ENCODE measurements at regions of chr6 and their contacts with region 1.

Region 1: GRCh38 chr6:34887753-34888513 is at the start of gene TAF11:
- DNase-seq: peak; percentile 90 to 93
- ATAC-seq: peak; percentile 93 to 94
- H3K4me3 ChIP-seq: peak within 1 kb of the TSS; percentile 90 to 96 (median 94)
- H3K27ac ChIP-seq: peak within 1 kb of the TSS; percentile 82 to 89 (median 88)
- H3K4me1 ChIP-seq: peaks cover 20 to 23% of the 10 kb centered on the region in 2 donors
- H3K27me3 ChIP-seq: no peaks in the 10 kb centered on the region
- CTCF ChIP-seq: peak in 1 of 5 experiments; percentile 18
- POLR2A ChIP-seq: peak; percentile 70 to 79
- total RNA-seq, gene TAF11: 23.2 to 32.6 (median 24.0) TPM

Region 2: DNA sequence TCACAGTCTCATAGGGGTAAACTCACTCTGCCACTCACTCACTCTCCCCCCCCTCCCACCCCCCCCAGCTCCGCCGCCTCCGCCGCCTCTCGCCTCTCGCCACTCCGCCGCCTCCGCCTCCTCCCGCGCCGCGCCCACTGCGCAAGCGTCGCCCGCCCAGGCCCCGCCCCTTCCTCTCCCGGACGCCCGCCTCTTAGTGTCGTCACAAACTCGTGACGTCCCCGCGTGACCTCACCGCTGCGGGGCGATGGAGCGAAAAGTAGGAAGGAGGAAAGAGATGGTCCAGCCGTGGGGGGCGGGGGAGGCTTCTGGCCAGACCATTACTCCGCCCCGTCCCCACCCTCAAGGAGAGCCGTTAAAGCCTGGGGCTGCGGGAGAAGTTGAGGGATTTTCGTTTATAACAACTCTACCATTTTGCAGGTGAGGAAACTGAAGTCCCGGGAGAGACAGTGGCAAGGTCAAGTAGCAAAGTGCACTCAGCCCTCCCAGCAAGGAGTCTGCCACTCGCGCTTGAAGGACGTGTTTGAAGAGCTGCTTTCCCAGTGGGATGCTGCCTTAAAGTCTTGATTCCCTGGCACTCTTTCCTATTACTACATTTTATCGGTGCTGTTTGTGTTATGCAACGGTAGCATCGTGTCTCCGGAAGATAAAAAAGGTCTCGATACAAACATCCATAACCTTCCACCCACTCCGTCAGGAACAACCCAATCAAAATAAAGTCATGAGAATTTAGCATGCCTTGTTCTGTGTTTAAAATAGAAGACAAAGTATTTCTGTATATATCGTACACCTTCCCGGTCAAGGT is 191.0 kb before region 1 on chr6 and contains the start of gene ILRUN:
- in situ Hi-C with region 1: no loop called
- intact Hi-C with region 1: loop called (anchors 5 kb)
- DNase-seq: peak; percentile 92 to 94
- ATAC-seq: peak; percentile 78 to 80
- H3K4me3 ChIP-seq: peak within 1 kb of the TSS; percentile 79 to 100 (median 95)
- H3K27ac ChIP-seq: peak within 1 kb of the TSS; percentile 99 to 100 (median 100)
- H3K4me1 ChIP-seq: peaks cover 30 to 31% of the 10 kb centered on the region in 2 donors
- H3K27me3 ChIP-seq: no peaks in the 10 kb centered on the region
- CTCF ChIP-seq: no peak
- POLR2A ChIP-seq: peak; percentile 76 to 87
- total RNA-seq, gene ILRUN: 136 to 252 (median 169) TPM

Region 3: DNA sequence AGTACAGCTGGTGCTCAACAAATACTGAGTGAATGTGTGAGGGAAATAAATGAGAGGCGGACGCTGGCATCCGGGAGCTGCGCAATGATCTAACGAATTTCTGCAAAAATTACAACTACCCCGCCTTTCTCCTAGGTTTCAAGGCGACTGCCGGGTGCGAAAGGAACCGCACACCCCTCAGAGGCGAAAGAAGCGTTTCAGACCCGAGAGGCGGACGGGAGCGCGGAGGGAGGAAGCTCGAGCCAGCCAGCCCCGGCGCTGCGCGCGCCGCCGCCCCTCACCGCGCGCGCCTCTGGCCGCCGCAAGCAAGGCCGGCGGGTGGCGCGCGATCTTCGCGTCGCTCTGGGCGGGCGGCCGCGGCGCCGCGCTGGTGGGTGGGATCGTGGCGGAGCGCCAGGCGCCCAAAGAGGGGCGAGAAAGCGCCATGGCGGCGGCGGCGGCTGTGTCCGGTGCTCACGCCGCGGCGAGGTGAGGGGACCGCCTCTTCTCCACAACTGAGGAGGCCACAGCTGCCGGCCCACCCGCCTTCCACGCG is 96.2 kb before region 1 on chr6 and contains the start of gene BLTP3A:
- in situ Hi-C with region 1: loop called in 1 of 4 experiments (anchors 5 kb)
- intact Hi-C with region 1: loop called (anchors 1 kb)
- DNase-seq: peak; percentile 41 to 66
- ATAC-seq: peak; percentile 85 to 87
- H3K4me3 ChIP-seq: peak within 1 kb of the TSS; percentile 87 to 95 (median 93)
- H3K27ac ChIP-seq: peak within 1 kb of the TSS; percentile 93 to 98 (median 96)
- H3K4me1 ChIP-seq: peaks cover 5 to 14% of the 10 kb centered on the region in 2 donors
- H3K27me3 ChIP-seq: no peaks in the 10 kb centered on the region
- CTCF ChIP-seq: peak in 3 of 5 experiments; percentile 11 to 34 (median 28)
- POLR2A ChIP-seq: peak; percentile 72 to 85
- total RNA-seq, gene BLTP3A: 19.9 to 36.0 (median 23.2) TPM

Region 4: DNA sequence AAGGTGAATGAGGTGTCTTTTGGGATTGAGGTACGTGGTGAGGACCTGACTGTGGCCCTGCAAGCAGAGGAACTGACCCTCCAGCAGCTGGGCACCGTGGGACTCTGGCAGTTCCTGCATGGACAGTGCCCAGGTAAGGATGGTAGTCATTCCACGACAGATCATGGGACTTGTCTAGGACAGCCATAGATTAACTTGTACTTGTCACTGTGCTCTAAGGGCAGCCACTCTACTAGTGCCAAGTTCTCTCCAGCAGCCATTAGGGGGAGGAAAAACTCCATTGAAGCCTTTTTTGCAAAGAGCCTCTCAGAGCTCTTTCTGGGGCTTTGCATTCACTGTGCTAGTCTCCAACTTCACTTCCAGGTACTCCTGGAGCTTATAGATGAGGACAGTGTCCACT is 20.4 kb before region 1 on chr6:
- in situ Hi-C with region 1: no loop called
- intact Hi-C with region 1: loop called (anchors 2 kb)
- DNase-seq: no peak
- ATAC-seq: no peak
- H3K4me3 ChIP-seq: no peak overlapping the region
- H3K27ac ChIP-seq: peak overlapping the region in 1 of 4 donors; percentile 74
- H3K4me1 ChIP-seq: peaks cover 11 to 23% of the 10 kb centered on the region in 2 donors
- H3K27me3 ChIP-seq: no peaks in the 10 kb centered on the region
- CTCF ChIP-seq: no peak
- POLR2A ChIP-seq: no peak

Region 5: GRCh38 chr6:34964564-34964963 is 76.6 kb after region 1 on chr6:
- in situ Hi-C with region 1: loop called in 1 of 4 experiments (anchors 10 kb)
- intact Hi-C with region 1: no loop called
- DNase-seq: no peak
- ATAC-seq: no peak
- H3K4me3 ChIP-seq: no peak overlapping the region
- H3K27ac ChIP-seq: no peak overlapping the region
- H3K4me1 ChIP-seq: peaks cover 19 to 31% of the 10 kb centered on the region in 2 donors
- H3K27me3 ChIP-seq: no peaks in the 10 kb centered on the region
- CTCF ChIP-seq: no peak
- POLR2A ChIP-seq: no peak